Natural killer cell (primary cell): ENCODE measurements at regions of chr6 and their contacts with region 1.

Region 1: GRCh38 chr6:70520575-70520974 is 46.2 kb upstream of the SDHAF4 start:
- DNase-seq: peak in 1 of 2 donors; percentile 59
- ATAC-seq: peak in 1 of 3 donors; percentile 44
- H3K4me3 ChIP-seq: no peak overlapping the region
- H3K4me3 Mint-ChIP-seq: no peak overlapping the region
- H3K27ac ChIP-seq: no peak overlapping the region
- H3K27ac Mint-ChIP-seq: no peak overlapping the region
- H3K4me1 ChIP-seq: no peaks in the 10 kb centered on the region
- H3K4me1 Mint-ChIP-seq: no peaks in the 10 kb centered on the region
- H3K27me3 ChIP-seq: no peaks in the 10 kb centered on the region
- H3K27me3 Mint-ChIP-seq: no peaks in the 10 kb centered on the region
- CTCF ChIP-seq: peak; percentile 46

Region 2: DNA sequence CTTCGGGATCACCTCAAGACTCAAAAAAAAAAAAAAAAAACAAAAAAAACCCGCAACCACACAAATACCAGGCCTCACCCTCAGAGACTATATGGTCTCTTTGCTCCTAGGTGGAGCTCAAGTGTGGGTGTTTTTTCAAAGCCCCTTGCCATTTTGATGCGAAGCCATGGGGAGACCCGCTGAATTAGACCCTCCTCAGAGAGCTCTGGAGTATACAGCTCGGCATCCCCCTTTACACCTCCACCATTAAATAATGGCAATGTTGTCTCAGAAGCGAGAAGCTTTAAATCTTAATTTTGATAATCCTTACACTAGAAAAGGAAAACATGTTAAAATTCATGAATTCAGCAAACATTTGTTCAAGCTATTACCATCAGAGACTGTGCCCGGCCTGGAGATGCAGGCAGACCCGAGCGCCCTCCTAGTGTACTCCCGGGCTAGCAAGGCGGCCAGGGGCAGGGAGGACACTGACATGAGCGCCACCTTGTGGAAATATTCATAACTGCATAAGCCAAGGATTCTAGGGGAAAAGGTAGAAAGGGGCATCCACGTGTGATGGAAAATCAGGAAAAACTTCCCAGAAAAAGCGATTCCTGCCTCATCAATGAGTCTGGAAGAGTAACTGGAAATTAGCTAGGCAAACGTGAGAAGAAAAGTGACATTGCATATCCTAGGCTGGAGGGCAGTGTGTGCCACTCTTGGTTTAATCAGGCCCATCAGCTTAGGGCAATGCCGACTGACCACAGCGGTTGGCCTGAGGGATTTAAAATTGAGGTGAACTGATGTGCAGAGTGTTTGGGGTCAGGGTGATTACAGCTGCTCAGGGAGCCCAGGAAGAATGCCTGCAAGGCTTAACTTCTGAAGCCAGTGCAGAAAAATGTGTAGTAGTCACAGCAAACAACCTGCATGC is 363.8 kb after region 1 on chr6:
- intact Hi-C with region 1: loop called (anchors 2 kb)
- DNase-seq: peak; percentile 32 to 76
- ATAC-seq: peak; percentile 75 to 92 (median 87)
- H3K4me3 ChIP-seq: no peak overlapping the region
- H3K4me3 Mint-ChIP-seq: no peak overlapping the region
- H3K27ac ChIP-seq: no peak overlapping the region
- H3K27ac Mint-ChIP-seq: no peak overlapping the region
- H3K4me1 ChIP-seq: no peaks in the 10 kb centered on the region
- H3K4me1 Mint-ChIP-seq: no peaks in the 10 kb centered on the region
- H3K27me3 ChIP-seq: no peaks in the 10 kb centered on the region
- H3K27me3 Mint-ChIP-seq: peaks cover 16 to 32% of the 10 kb centered on the region in 2 donors
- CTCF ChIP-seq: peak; percentile 86

Region 3: DNA sequence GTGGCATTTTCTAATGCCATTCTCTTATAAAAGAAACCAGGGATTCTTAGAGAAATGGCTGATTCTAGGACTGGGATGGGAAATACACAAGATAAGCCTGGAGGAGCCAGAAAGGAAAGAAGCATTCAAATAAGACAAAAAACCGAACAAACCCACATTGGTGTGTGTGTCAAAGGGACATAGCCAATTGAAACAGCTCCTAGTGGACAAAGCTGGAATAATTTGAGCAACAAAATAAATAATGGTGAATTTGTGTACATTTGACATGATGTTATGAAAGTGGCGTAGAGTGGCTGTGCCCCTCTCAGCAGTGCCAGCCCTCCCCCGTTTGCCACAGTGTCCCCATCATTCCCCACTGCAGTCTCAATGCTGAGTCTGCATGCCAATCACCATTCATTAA is 380.8 kb after region 1 on chr6:
- intact Hi-C with region 1: no loop called
- DNase-seq: no peak
- ATAC-seq: no peak
- H3K4me3 ChIP-seq: no peak overlapping the region
- H3K4me3 Mint-ChIP-seq: no peak overlapping the region
- H3K27ac ChIP-seq: no peak overlapping the region
- H3K27ac Mint-ChIP-seq: no peak overlapping the region
- H3K4me1 ChIP-seq: no peaks in the 10 kb centered on the region
- H3K4me1 Mint-ChIP-seq: no peaks in the 10 kb centered on the region
- H3K27me3 ChIP-seq: no peaks in the 10 kb centered on the region
- H3K27me3 Mint-ChIP-seq: peaks cover 4 to 29% of the 10 kb centered on the region in 2 donors
- CTCF ChIP-seq: no peak

Region 4: DNA sequence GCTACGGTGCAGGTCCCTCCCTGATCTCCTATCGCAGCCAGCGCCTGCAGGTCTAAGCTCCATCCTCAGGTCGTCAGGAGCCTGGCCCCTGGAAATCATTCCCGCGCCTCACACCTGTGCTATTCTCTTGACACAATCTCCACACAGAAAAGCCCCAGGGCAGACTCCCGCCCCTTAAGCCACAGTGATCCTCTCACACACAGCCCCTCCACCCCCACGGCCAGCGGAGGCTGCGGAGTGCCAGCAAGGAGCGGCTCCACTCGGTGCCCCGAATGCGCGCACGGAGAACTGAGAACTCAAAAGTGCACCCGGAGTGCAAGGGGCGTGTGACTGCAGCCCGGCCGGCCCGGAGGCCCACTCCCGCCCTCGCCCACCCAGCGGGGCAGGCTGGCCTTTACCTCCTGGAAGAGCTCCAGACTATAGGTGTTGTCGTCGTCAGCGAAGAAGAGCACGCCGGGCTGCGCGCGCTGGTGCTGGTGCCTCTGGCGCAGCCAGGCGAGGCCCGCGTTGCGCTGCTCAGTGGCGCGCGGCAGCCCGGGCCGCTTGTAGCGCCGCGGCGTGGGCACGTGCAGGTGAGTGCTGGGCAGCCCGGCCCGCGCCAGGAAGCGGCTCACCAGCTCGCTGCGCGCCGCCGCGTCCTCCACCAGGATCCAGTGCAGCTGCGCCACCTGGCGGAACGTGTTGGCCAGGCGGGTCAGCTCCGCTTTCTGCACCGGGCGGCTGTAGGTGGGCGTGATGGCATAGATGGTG is 435.0 kb after region 1 on chr6:
- intact Hi-C with region 1: loop called (anchors 2 kb)
- DNase-seq: peak; percentile 71 to 90
- ATAC-seq: peak; percentile 88 to 96 (median 94)
- H3K4me3 ChIP-seq: peak overlapping the region; percentile 13
- H3K4me3 Mint-ChIP-seq: peak overlapping the region; percentile 87
- H3K27ac ChIP-seq: no peak overlapping the region
- H3K27ac Mint-ChIP-seq: no peak overlapping the region
- H3K4me1 ChIP-seq: peaks cover 21% of the 10 kb centered on the region
- H3K4me1 Mint-ChIP-seq: peaks cover 11 to 16% of the 10 kb centered on the region in 2 donors
- H3K27me3 ChIP-seq: peaks cover 25% of the 10 kb centered on the region
- H3K27me3 Mint-ChIP-seq: peaks cover 47 to 53% of the 10 kb centered on the region in 2 donors
- CTCF ChIP-seq: peak; percentile 69